Breast epithelium (tissue), 4 donors: ENCODE measurements at regions of chr3 and their contacts with region 1.

Region 1: DNA sequence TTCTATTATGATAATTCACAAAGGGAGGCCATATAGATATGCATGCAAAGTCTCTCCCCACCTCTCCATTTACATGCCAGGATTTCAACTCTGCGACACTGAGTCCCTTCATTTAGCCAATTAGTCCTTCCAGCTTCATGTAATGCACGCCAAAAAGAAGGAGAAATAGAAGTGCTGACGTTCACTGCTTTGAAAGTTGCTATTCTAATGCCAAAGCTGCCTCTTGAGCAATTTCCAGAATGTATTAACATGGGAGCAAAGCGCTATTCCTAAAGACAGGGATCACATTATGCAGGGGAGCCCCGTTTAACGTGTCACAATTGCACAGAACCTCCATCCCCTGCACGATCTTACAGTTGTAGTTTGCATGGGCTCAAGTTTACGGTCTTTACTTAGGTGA is 130.5 kb downstream of the TIGIT start:
- DNase-seq: no peak
- H3K4me3 ChIP-seq: no peak overlapping the region
- H3K27ac ChIP-seq: no peak overlapping the region
- H3K4me1 ChIP-seq: peaks cover 0 to under 1% of the 10 kb centered on the region in 2 donors
- H3K27me3 ChIP-seq: no peaks in the 10 kb centered on the region
- CTCF ChIP-seq: no peak
- POLR2A ChIP-seq: no peak

Region 2: GRCh38 chr3:114290911-114291901 is 133.1 kb before region 1 on chr3:
- intact Hi-C with region 1: no loop called
- DNase-seq: peak in 1 of 2 donors; percentile 35
- H3K4me3 ChIP-seq: no peak overlapping the region
- H3K27ac ChIP-seq: no peak overlapping the region
- H3K4me1 ChIP-seq: no peaks in the 10 kb centered on the region
- H3K27me3 ChIP-seq: no peaks in the 10 kb centered on the region
- CTCF ChIP-seq: peak; percentile 30 to 52 (median 47)
- POLR2A ChIP-seq: no peak

Region 3: GRCh38 chr3:114469070-114469469 is 44.7 kb after region 1 on chr3:
- intact Hi-C with region 1: loop called (anchors 2 kb)
- DNase-seq: no peak
- H3K4me3 ChIP-seq: no peak overlapping the region
- H3K27ac ChIP-seq: no peak overlapping the region
- H3K4me1 ChIP-seq: no peaks in the 10 kb centered on the region
- H3K27me3 ChIP-seq: no peaks in the 10 kb centered on the region
- CTCF ChIP-seq: no peak
- POLR2A ChIP-seq: no peak